Sigmoid colon (tissue), 7 donors: ENCODE measurements at regions of chr22 and their contacts with region 1.

Region 1: DNA sequence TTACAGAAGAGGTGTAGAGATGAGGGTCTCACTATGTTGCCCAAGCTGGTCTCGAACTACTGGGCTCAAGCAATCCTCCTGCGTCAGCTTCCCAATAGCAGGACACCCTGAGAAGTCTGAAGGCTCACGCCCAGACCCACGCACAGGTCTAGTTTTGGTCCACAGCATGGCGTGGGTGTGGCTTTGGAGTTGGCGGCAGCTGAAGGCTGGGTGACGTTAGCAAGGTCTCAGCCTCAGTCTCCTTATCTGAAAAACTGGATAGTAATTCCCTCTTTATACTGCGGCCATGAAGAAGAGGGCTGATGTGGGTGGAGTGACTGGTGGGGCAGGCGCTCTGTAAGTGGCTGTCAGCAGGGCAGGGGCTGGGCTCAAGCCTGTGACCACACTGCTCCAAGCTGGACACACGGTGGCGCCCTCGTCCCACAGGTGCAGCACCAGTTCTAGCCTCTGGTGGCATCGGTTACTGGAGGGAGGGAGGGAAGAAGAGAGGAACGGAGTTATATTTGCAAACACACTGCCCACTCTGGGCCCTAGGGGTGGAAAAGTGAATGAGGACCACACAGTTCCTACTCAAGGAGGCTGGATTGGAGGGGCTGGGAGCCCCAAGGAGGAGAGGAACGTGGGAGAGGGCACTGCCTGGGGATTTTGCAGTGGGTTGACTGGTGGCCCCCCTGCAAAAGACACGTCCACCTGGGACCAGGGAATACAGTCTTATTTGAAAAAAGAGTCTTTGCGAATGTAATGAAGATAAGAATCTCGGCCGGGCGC is 19.6 kb upstream of the CARD10 start:
- DNase-seq: peak; percentile 97
- H3K4me3 ChIP-seq: no peak overlapping the region
- H3K27ac ChIP-seq: peak overlapping the region in 1 of 4 donors; percentile 30
- H3K4me1 ChIP-seq: peaks cover 0 to 10% (median 9%) of the 10 kb centered on the region in 4 donors
- H3K27me3 ChIP-seq: peaks cover 0 to 6% (median 0%) of the 10 kb centered on the region in 3 donors
- CTCF ChIP-seq: peak; percentile 92 to 99 (median 98)
- EP300 ChIP-seq: no peak
- POLR2A ChIP-seq: no peak

Region 2: DNA sequence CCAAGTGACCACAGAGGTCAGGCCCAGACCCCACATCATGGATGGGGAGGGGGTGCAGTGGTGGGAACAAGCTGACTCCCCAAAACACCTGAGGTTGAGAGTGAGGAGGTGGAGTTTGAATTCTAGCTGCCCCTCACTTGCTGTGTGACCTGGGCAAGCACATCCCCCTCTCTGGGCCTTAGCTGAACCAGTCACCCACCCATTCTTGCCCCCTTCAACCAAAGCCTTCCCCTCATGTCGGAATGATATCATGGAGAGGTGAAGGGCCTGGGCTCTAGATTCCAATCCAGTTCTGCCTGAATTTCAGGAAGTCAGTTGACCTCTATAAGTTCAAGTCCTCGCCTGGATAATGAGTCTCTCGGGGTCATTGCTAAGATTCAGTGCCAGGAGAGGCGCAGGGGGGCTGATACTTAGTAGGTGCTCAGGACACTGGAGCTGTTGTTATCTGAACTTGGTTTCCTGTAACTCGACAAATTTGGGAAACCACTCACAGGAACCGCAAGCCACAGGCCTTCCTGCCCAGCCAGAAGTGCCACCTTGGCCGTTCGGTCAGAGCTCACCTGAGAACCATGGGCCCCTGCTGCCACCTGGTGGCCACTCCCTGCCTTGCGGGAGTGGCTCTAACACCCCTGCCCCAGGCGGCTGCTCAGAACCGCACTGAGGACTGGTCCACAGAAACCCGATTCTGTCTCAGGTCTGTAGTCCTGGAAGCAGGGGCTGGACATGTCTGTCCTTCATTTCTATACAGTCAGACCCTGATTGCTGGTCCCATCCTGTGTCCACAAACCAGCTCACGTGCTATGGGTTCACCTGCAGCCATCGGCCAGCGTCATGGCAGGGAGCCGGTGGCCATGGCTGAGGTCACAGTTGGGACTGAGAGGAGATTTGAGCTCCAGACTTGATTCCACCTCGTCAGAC is 28.4 kb after region 1 on chr22:
- intact Hi-C with region 1: loop called (anchors 1 kb)
- DNase-seq: peak; percentile 88
- H3K4me3 ChIP-seq: no peak overlapping the region
- H3K27ac ChIP-seq: peak overlapping the region; percentile 46 to 99 (median 74)
- H3K4me1 ChIP-seq: peaks cover 0 to 69% (median 59%) of the 10 kb centered on the region in 4 donors
- H3K27me3 ChIP-seq: no peaks in the 10 kb centered on the region
- CTCF ChIP-seq: peak; percentile 89 to 98 (median 92)
- EP300 ChIP-seq: no peak
- POLR2A ChIP-seq: no peak

Region 3: DNA sequence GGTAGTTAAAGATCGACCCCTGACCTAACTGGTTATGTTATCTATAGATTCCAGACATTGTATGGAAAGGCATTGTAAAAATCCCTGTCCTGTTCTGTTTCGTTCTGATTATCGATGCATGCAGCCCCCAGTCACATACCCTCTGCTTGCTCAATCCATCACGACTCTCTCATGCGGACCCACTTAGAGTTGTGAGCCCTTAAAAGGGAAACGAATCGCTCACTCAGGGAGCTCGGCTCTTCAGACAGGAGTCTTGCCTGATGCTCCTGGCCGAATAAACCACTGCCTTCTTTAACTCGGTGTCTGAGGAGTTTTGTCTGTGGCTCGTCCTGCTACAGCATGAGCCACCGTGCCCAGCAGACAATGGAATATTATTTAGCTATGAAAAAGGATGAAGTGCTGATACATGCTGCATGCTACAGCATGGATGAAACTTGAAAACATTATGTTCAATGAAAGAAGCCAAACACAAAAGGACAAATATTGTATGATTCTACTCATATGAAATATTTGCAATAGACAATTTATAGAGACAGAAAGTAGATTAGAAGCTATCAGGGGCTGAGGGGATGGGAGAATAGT is 53.1 kb after region 1 on chr22:
- intact Hi-C with region 1: loop called (anchors 2 kb)
- DNase-seq: no peak
- H3K4me3 ChIP-seq: no peak overlapping the region
- H3K27ac ChIP-seq: no peak overlapping the region
- H3K4me1 ChIP-seq: peaks cover 0 to 8% (median 4%) of the 10 kb centered on the region in 4 donors
- H3K27me3 ChIP-seq: peaks cover 0 to 8% (median 0%) of the 10 kb centered on the region in 3 donors
- CTCF ChIP-seq: no peak
- EP300 ChIP-seq: no peak
- POLR2A ChIP-seq: no peak